Activated CD4-positive, alpha-beta T cell treated with anti-CD3 and anti-CD28 coated beads, Interleukin-2, amount 10 ng/mL, durations not matched to agents 24 days and 14 days (primary cell): ENCODE measurements at regions of chr5 and their contacts with region 1.

Region 1: DNA sequence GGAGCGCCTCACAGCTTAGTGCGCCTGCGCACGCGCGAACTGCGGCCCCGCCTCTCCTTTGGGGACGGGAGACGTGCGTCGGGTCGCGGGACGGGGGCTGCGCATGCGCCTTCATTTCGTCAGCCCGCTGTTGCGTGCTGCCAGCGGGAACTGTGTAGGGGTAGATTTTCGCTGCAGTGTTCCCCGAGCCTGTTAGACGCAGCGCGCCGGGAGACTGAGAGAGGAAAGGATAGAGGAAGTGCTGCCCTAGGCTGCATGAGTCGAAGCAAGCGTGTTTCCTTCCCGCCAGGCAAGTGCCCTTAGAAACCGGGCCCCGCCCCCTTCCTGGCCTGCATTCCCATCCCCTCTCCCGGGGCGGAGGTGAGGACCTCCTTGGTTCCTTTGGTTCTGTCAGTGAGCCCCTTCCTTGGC is 12.3 kb downstream of the ITGA1 start:
- DNase-seq: no peak
- H3K4me3 Mint-ChIP-seq: peak overlapping the region; percentile 96
- H3K27ac Mint-ChIP-seq: peak overlapping the region; percentile 95
- H3K4me1 Mint-ChIP-seq: peaks cover 44% of the 10 kb centered on the region
- H3K27me3 Mint-ChIP-seq: peaks cover 5% of the 10 kb centered on the region

Region 2: DNA sequence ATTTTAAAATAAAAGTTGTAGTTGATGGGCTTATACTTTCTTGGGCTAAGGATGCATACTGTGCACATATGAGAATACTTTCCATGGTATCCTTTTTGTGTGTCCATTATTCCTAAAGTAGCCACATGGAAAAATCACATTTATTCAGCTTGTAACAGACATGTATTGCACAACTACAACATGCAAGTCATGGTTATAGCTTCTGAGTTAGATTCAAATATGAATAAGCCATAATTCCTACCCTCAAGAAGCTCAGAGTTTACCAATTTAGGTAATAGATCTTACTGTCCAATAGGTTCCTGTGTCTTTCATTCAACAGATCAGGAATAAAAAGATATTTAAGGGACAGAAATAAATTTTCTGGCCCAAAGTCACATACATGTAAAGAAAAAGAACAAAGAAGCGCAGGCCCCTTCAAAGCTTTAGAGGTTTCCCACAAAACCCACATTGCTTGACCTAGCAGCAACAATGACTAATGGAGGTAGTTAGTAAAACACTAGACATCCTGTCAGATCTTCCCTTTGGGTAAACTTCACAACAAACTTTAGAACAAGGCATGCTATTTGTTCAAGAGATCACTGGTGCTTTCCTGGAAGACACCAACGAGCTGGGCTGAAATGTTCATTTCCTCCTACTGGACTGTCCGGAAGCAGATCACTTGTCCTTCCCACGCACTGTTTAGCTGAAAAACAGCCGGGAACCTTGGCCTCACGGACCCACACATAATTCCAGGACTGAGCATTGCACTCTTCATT is 90.6 kb before region 1 on chr5:
- intact Hi-C with region 1: loop called (anchors 2 kb)
- DNase-seq: peak; percentile 72
- H3K4me3 Mint-ChIP-seq: peak overlapping the region; percentile 20
- H3K27ac Mint-ChIP-seq: peak overlapping the region; percentile 25
- H3K4me1 Mint-ChIP-seq: peaks cover 50% of the 10 kb centered on the region
- H3K27me3 Mint-ChIP-seq: peaks cover 2% of the 10 kb centered on the region

Region 3: GRCh38 chr5:52731274-52732027 is 68.5 kb before region 1 on chr5:
- intact Hi-C with region 1: no loop called
- DNase-seq: no peak
- H3K4me3 Mint-ChIP-seq: no peak overlapping the region
- H3K27ac Mint-ChIP-seq: no peak overlapping the region
- H3K4me1 Mint-ChIP-seq: peaks cover 30% of the 10 kb centered on the region
- H3K27me3 Mint-ChIP-seq: no peaks in the 10 kb centered on the region

Region 4: GRCh38 chr5:52743970-52744369 is 56.0 kb before region 1 on chr5:
- intact Hi-C with region 1: loop called (anchors 1 kb)
- DNase-seq: peak; percentile 89
- H3K4me3 Mint-ChIP-seq: peak overlapping the region; percentile 31
- H3K27ac Mint-ChIP-seq: peak overlapping the region; percentile 76
- H3K4me1 Mint-ChIP-seq: peaks cover 49% of the 10 kb centered on the region
- H3K27me3 Mint-ChIP-seq: no peaks in the 10 kb centered on the region

Region 5: DNA sequence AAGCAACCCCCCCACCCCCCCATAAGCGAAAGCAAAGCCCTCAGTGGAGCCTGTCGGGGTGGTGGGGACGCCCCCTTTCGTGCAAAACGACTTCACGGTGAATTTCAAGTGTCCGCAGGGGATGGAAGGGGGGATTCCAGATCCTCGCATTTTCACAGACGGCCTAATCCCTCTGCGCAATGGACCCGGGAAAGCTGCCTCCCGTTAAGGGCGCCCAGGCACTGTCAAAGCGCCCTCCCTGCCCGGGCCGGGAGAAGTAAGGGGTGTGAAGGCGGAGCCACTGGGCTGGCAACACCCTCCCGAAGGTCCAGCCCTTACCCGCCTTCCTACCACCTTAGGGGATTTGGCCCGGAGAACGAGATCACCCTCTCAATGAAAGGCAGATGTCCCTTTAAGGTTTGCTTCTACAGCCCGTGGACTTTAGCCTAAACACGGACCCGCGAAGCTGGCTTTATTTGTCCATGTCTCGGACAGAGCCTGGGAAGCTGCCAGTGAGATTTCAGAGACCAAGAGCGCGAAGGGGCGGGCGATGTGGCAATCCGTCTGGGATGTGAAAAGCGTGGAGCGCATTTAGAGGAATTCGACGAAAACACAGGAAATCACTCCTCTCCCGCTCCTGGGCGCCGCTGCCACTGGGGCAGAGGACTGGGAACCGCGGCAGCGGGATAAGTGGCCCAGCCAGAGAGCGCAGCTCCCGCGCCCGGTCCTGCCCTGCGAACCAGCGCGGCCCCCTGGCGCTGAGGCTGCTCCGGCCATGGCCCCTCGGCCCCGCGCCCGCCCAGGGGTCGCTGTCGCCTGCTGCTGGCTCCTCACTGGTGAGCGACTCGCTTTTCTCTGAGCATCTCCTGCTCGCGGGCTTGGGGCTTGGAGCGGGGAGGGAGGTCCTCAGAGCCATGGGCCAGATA is 12.1 kb before region 1 on chr5 and contains the starts of genes ITGA1 and PELO:
- intact Hi-C with region 1: loop called (anchors 1 kb)
- DNase-seq: peak; percentile 85
- H3K4me3 Mint-ChIP-seq: peak within 1 kb of the TSS; percentile 91
- H3K27ac Mint-ChIP-seq: peak within 1 kb of the TSS; percentile 73
- H3K4me1 Mint-ChIP-seq: peaks cover 30% of the 10 kb centered on the region
- H3K27me3 Mint-ChIP-seq: peaks cover 30% of the 10 kb centered on the region
- total RNA-seq, gene ITGA1: 1.6 and 2.2 TPM in 2 replicates
- total RNA-seq, gene PELO: 20.0 and 21.2 TPM in 2 replicates

Region 6: GRCh38 chr5:52844885-52845284 is 44.9 kb after region 1 on chr5:
- intact Hi-C with region 1: no loop called
- DNase-seq: no peak
- H3K4me3 Mint-ChIP-seq: no peak overlapping the region
- H3K27ac Mint-ChIP-seq: no peak overlapping the region
- H3K4me1 Mint-ChIP-seq: no peaks in the 10 kb centered on the region
- H3K27me3 Mint-ChIP-seq: no peaks in the 10 kb centered on the region

Region 7: DNA sequence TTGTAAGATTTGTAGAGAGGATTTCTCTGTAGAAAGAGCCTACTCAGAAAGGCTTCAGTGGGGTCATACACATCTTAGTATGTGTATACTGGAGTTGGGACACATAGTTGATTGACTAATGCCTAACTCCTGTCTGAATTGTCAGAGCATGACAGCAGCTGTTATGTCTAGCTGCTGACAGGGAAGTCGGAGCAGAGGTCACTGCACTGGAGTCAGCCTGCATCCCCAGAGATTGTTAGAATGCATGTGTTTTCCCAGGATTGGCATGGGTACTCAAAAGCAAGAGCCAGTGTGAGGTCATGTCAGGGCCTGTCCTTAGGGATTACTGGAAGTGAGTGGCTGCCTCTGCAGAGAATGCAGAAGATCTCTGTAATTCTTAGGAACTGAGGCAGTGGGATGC is 70.5 kb after region 1 on chr5:
- intact Hi-C with region 1: no loop called
- DNase-seq: no peak
- H3K4me3 Mint-ChIP-seq: no peak overlapping the region
- H3K27ac Mint-ChIP-seq: no peak overlapping the region
- H3K4me1 Mint-ChIP-seq: peaks cover 4% of the 10 kb centered on the region
- H3K27me3 Mint-ChIP-seq: peaks cover 15% of the 10 kb centered on the region

Region 8: GRCh38 chr5:53035868-53036381 is 235.9 kb after region 1 on chr5:
- intact Hi-C with region 1: no loop called
- DNase-seq: no peak
- H3K4me3 Mint-ChIP-seq: no peak overlapping the region
- H3K27ac Mint-ChIP-seq: no peak overlapping the region
- H3K4me1 Mint-ChIP-seq: peaks cover 66% of the 10 kb centered on the region
- H3K27me3 Mint-ChIP-seq: no peaks in the 10 kb centered on the region

Region 9: GRCh38 chr5:53109443-53110127 is 309.6 kb after region 1 on chr5 and contains the start of gene MOCS2:
- intact Hi-C with region 1: loop called (anchors 5 kb)
- DNase-seq: peak; percentile 98
- H3K4me3 Mint-ChIP-seq: peak within 1 kb of the TSS; percentile 91
- H3K27ac Mint-ChIP-seq: peak within 1 kb of the TSS; percentile 89
- H3K4me1 Mint-ChIP-seq: peaks cover 31% of the 10 kb centered on the region
- H3K27me3 Mint-ChIP-seq: no peaks in the 10 kb centered on the region
- total RNA-seq, gene MOCS2: 16.5 and 18.4 TPM in 2 replicates